Colonic mucosa (tissue), 4 donors: ENCODE measurements at regions of chr12 and their contacts with region 1.

Region 1: DNA sequence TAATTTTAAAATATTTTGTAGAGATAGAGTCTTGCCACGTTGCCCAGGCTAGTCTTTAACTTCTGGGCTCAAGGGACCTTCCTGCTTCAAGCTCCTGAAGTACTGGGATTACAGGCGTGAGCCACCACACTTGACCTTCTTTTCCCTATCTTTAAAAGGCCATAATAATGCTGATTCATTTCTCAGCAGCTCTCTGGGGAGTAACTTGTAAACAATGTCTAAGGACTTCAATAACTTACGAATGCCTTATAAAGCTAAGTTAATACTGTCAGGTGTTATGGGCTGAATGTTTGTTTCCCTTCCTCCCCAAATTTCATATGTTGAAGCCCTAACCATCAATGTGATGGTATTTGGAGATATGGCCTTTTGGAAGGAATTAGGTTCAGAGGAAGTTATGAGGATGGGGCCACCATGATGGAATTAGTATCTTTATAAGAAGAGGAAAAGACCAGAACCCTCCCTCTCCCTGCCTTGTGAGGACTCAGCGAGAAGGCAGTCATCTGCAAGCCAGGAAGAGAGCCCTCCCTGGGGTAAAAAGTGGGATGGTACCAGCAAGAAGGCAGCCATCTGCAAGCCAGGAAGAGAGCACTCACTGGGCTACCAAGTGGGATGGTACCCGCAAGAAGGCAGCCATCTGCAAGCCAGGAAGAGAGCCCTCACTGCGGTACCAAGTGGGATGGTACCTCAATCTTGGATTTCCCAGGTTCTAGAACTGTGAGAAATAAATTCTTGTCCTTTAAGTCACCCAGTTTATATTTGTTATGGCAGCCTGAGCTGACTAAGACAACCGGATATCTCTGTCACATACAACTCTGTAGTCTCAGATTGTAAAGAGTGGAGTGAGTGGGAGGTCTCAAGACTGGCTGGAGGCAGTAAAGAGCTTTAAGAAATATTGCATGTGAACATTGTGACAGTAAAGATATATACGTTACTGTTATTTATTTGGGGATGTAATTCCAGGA is 16.3 kb upstream of the YBX3 start:
- DNase-seq: no peak
- H3K4me3 ChIP-seq: no peak overlapping the region
- H3K27ac ChIP-seq: no peak overlapping the region
- H3K4me1 ChIP-seq: no peaks in the 10 kb centered on the region
- H3K27me3 ChIP-seq: no peaks in the 10 kb centered on the region
- CTCF ChIP-seq: no peak

Region 2: DNA sequence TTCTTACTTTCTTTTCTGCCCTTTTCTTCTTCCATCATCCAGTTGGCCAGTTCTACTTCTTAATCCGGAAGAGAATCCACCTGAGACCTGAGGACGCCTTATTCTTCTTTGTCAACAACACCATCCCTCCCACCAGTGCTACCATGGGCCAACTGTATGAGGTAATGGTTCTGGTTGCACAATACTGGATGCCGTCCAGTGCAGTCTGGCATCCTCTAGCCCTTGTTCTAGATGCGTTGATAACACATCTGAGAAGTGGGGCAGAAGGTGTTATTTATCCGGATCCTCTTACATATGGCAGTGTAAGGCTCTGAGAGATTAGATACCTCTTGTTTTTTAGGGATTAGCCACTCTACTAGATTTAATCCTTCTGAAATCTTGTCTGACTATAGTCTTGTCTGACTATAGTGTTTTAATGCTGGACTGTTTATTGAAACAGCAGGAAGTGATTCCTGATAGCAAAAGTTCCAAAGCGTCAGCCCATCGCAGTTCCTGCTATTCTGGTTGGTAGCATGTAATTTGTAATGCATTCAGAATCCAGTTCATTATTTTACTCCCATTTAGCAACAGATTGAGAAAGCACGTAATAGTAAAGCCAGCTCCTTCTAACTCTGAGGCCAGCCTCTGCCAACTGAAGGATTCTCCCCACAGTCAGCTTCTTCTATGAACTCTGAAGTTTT is 518.9 kb before region 1 on chr12:
- intact Hi-C with region 1: loop called (anchors 10 kb)
- DNase-seq: peak; percentile 26
- H3K4me3 ChIP-seq: no peak overlapping the region
- H3K27ac ChIP-seq: no peak overlapping the region
- H3K4me1 ChIP-seq: no peaks in the 10 kb centered on the region
- H3K27me3 ChIP-seq: no peaks in the 10 kb centered on the region
- CTCF ChIP-seq: no peak

Region 3: DNA sequence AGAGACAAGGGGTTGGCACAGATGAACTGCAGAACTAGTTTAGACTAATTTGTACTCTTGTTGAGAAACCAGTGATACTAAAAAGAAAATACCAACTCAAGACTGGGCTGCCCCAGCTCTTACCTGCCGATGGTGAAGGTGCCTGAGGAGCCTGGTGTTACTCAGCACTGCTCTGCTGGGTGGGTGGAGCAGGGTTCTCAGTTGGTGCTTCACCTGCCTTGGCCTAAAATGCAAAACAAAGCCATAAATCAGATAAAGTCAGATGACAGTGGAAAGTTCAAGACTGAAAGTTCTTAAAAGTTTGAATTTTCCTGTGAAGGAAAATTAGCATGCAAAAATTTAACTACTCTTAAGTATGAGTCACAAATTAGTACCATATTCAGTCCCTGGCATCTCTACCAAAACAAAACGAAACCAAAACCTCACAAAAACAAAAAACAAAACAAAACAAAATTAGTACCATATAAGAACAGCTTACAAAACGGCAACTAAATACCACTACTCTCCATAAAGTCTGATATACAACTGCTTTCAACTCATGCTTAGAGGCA is 38.2 kb before region 1 on chr12:
- intact Hi-C with region 1: no loop called
- DNase-seq: no peak
- H3K4me3 ChIP-seq: no peak overlapping the region
- H3K27ac ChIP-seq: no peak overlapping the region
- H3K4me1 ChIP-seq: no peaks in the 10 kb centered on the region
- H3K27me3 ChIP-seq: no peaks in the 10 kb centered on the region
- CTCF ChIP-seq: no peak

Region 4: GRCh38 chr12:10968765-10969456 is 229.5 kb after region 1 on chr12:
- intact Hi-C with region 1: no loop called
- DNase-seq: no peak
- H3K4me3 ChIP-seq: no peak overlapping the region
- H3K27ac ChIP-seq: no peak overlapping the region
- H3K4me1 ChIP-seq: no peaks in the 10 kb centered on the region
- H3K27me3 ChIP-seq: no peaks in the 10 kb centered on the region
- CTCF ChIP-seq: no peak

Region 5: DNA sequence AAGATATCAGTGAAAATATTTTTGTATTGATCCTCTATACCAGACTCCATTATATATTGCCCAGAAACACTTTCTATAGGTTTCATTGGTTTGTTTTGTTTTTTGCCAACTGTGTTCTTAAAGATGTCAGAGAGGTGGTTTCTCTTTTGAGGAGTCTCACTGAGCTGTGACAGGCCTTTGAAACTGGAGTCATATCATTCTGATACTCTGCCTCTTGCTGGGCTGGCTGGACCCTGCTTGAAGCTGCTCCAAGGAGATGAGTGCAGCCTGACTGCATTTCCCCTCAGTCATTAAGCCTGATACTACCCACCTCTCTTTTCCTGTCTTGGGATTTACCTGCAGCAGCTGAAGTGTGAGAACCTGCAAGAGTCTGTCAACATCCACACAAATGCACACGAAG is 411.4 kb after region 1 on chr12:
- intact Hi-C with region 1: no loop called
- DNase-seq: no peak
- H3K4me3 ChIP-seq: no peak overlapping the region
- H3K27ac ChIP-seq: no peak overlapping the region
- H3K4me1 ChIP-seq: no peaks in the 10 kb centered on the region
- H3K27me3 ChIP-seq: no peaks in the 10 kb centered on the region
- CTCF ChIP-seq: no peak